Aorta (tissue), 5 donors: ENCODE measurements at regions of chr9 and their contacts with region 1.

Region 1: GRCh38 chr9:127112056-127112455 is 10.4 kb downstream of the ANGPTL2 start:
- DNase-seq: no peak
- ATAC-seq: peak; percentile 3
- H3K4me3 ChIP-seq: no peak overlapping the region
- H3K27ac ChIP-seq: no peak overlapping the region
- H3K4me1 ChIP-seq: no peaks in the 10 kb centered on the region
- H3K27me3 ChIP-seq: no peaks in the 10 kb centered on the region

Region 2: DNA sequence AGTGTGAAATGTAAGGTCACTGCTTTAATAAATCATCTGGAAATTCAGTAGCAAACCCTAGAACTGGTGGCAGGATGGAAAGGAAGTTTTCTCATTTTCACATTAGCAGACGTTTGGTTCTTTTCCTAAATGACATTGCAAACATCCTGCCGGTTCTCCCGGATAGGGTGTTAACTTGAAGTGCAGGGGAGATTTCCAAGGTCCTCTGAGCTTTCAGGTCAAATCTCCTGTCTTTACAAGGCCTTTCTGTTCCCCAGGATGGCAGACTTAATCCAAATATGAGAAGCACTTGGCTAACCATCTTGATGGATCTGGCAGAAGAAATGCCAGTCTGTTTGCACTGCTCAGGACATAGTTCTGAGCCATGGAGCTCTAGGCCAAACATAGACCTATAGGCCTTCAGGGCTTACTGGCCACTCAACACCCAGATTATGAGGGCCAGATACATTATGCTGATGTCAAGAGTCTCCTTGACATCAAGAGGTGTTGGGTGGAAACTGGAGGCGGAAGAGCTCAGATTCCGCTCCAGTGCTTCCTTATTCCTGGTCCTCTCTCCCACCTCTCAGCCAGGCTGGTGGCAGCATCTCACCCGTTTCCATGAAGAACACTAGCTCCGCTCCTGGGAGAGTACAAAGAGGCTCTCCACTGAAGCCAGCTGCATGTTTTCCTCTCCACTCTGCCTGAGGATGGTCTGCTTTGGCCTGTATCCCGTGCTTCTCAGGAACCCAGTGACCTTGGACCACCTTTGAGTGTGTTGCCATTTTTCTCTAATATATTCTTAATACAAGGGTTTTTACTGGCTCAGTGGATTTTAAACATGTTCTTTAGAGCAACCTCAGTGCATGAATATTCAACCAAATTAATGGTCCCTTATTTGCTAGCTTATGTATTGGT is 136.5 kb before region 1 on chr9:
- intact Hi-C with region 1: loop called in 1 of 2 experiments (anchors 10 kb)
- DNase-seq: no peak
- ATAC-seq: no peak
- H3K4me3 ChIP-seq: no peak overlapping the region
- H3K27ac ChIP-seq: no peak overlapping the region
- H3K4me1 ChIP-seq: no peaks in the 10 kb centered on the region
- H3K27me3 ChIP-seq: no peaks in the 10 kb centered on the region